GM12878 (cell line): ENCODE measurements at regions of chr20 and their contacts with region 1.

Region 1: GRCh38 chr20:3551681-3552434 is 81.0 kb downstream of the ATRN start:
- DNase-seq: no peak
- ATAC-seq: no peak
- H3K4me3 ChIP-seq: no peak overlapping the region
- H3K27ac ChIP-seq: no peak overlapping the region
- H3K4me1 ChIP-seq: no peaks in the 10 kb centered on the region
- H3K27me3 ChIP-seq: no peaks in the 10 kb centered on the region
- CTCF ChIP-seq: no peak
- EP300 ChIP-seq: no peak
- POLR2A ChIP-seq: no peak
- RAD21 ChIP-seq: no peak

Region 2: GRCh38 chr20:3563548-3564177 is 11.8 kb after region 1 on chr20:
- CTCF ChIA-PET with region 1: interaction called, 16 read pairs
- POLR2A ChIA-PET with region 1: no interaction called
- RAD21 ChIA-PET with region 1: no interaction called
- SMC1A ChIA-PET with region 1: interaction called, 4 read pairs
- in situ Hi-C with region 1: no loop called
- intact Hi-C with region 1: no loop called
- DNase-seq: peak; percentile 8
- ATAC-seq: peak; percentile 75
- H3K4me3 ChIP-seq: no peak overlapping the region
- H3K27ac ChIP-seq: no peak overlapping the region
- H3K4me1 ChIP-seq: no peaks in the 10 kb centered on the region
- H3K27me3 ChIP-seq: no peaks in the 10 kb centered on the region
- CTCF ChIP-seq: peak; percentile 63 to 68 (median 66)
- EP300 ChIP-seq: no peak
- POLR2A ChIP-seq: no peak
- RAD21 ChIP-seq: peak; percentile 88

Region 3: GRCh38 chr20:3632311-3633004 is 80.6 kb after region 1 on chr20:
- CTCF ChIA-PET with region 1: no interaction called
- POLR2A ChIA-PET with region 1: no interaction called
- RAD21 ChIA-PET with region 1: no interaction called
- SMC1A ChIA-PET with region 1: no interaction called
- in situ Hi-C with region 1: no loop called
- intact Hi-C with region 1: no loop called
- DNase-seq: no peak
- ATAC-seq: no peak
- H3K4me3 ChIP-seq: no peak overlapping the region
- H3K27ac ChIP-seq: no peak overlapping the region
- H3K4me1 ChIP-seq: no peaks in the 10 kb centered on the region
- H3K27me3 ChIP-seq: no peaks in the 10 kb centered on the region
- CTCF ChIP-seq: no peak
- EP300 ChIP-seq: no peak
- POLR2A ChIP-seq: no peak
- RAD21 ChIP-seq: peak; percentile 21; the same call in 1 of the 2 replicates